B cell (primary cell): ENCODE measurements at regions of chr10 and their contacts with region 1.

Region 1: DNA sequence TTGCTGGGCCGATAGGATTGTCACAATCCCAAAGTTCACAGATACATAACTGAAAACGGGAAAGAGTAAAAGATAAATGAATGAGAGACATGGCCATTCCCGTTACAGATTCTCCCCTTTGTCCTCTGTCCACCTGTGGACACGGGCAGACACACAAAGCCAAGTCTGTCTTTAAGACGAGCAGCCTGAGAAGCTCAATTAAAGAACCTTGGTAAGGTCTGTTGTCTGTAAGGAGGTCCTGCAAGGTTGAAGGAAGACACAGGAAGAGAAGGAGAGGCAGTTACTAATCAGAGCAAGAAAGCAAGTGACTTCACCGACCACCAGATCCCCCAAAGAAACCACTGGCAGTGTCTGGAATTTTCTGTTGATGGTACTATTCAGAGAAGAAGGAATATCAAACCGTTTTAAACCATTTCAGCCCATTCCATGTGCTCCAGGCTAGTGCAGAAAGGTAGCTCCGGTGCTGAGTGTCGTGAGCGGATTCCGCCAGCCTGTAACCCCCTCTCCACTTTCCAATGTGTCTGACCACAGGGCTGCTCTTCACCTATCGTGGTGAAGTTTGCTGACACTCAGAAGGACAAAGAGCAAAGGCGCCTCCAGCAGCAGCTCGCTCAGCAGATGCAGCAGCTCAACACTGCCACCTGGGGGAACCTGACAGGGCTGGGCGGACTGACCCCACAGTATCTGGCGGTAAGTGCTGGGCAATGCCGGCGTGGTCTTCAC is 252.6 kb downstream of the CELF2 start:
- DNase-seq: peak; percentile 72
- ATAC-seq: peak; percentile 87
- H3K4me3 ChIP-seq: no peak overlapping the region
- H3K4me3 Mint-ChIP-seq: no peak overlapping the region
- H3K27ac ChIP-seq: peak overlapping the region in 1 of 2 donors; percentile 51
- H3K27ac Mint-ChIP-seq: peak overlapping the region; percentile 28
- H3K4me1 ChIP-seq: peaks cover 30 to 37% of the 10 kb centered on the region in 2 donors
- H3K4me1 Mint-ChIP-seq: peaks cover 43% of the 10 kb centered on the region
- H3K27me3 ChIP-seq: no peaks in the 10 kb centered on the region
- H3K27me3 Mint-ChIP-seq: no peaks in the 10 kb centered on the region
- CTCF ChIP-seq: peak; percentile 86

Region 2: GRCh38 chr10:11113156-11113555 is 157.1 kb before region 1 on chr10:
- CTCF ChIA-PET with region 1: interaction called, 85 read pairs
- POLR2A ChIA-PET with region 1: no interaction called
- intact Hi-C with region 1: loop called (anchors 1 kb)
- DNase-seq: peak; percentile 71
- ATAC-seq: peak; percentile 70
- H3K4me3 ChIP-seq: no peak overlapping the region
- H3K4me3 Mint-ChIP-seq: peak overlapping the region; percentile 17
- H3K27ac ChIP-seq: no peak overlapping the region
- H3K27ac Mint-ChIP-seq: no peak overlapping the region
- H3K4me1 ChIP-seq: peaks cover 7 to 9% of the 10 kb centered on the region in 2 donors
- H3K4me1 Mint-ChIP-seq: peaks cover 7% of the 10 kb centered on the region
- H3K27me3 ChIP-seq: no peaks in the 10 kb centered on the region
- H3K27me3 Mint-ChIP-seq: no peaks in the 10 kb centered on the region
- CTCF ChIP-seq: peak; percentile 67

Region 3: GRCh38 chr10:11145495-11145855 is 124.8 kb before region 1 on chr10:
- CTCF ChIA-PET with region 1: interaction called, 51 read pairs
- POLR2A ChIA-PET with region 1: interaction called, 6 read pairs
- intact Hi-C with region 1: loop called (anchors 1 kb)
- DNase-seq: peak; percentile 70
- ATAC-seq: peak; percentile 75
- H3K4me3 ChIP-seq: peak overlapping the region in 4 of 5 experiments; percentile 7 to 33 (median 22)
- H3K4me3 Mint-ChIP-seq: peak overlapping the region; percentile 68
- H3K27ac ChIP-seq: peak overlapping the region; percentile 33 to 76
- H3K27ac Mint-ChIP-seq: peak overlapping the region; percentile 85
- H3K4me1 ChIP-seq: peaks cover 84 to 89% of the 10 kb centered on the region in 2 donors
- H3K4me1 Mint-ChIP-seq: peaks cover 90% of the 10 kb centered on the region
- H3K27me3 ChIP-seq: no peaks in the 10 kb centered on the region
- H3K27me3 Mint-ChIP-seq: no peaks in the 10 kb centered on the region
- CTCF ChIP-seq: no peak

Region 4: DNA sequence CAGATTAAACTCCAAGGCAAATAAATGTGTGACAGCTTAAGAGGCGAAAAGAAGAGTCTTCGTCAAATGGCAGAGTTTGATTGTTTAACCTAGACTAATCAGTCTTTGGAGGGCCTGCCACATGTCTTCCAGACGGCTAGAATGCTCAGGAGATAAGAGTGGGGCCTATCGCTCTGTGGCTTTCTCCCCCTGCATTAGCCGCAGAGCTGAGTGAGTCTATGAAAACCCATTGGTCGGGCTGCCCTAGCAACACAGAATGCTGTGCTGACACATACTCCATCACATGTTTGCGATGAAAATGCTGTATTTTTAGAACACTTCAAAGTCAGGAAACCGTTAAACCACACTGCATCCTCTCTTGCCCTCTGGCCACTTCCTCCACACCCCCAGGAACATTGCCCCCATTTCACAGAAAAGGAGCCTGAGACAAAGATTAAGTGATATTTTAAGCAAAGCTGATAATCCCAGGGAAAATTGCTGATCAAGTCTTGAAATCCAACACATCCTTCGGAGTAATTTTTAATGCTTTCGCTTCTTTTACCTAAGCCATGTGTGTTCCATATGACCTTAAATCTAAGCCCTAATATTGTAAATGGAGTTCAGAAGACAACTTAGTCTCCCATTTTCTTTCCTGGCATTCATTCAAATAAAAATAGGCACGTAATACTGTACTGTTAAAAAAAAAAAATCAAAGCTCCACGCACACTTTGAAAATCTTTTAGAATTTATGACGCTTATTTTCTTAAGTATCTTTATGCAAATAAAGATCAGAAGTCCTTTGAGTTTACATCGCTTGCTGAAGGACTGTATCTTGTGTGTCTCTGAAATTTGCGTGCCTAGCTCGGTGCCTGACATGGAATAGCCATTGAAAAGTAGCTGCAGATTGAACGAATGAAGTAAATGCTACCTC is 91.4 kb before region 1 on chr10:
- CTCF ChIA-PET with region 1: interaction called, 30 read pairs
- POLR2A ChIA-PET with region 1: no interaction called
- intact Hi-C with region 1: no loop called
- DNase-seq: peak; percentile 85
- ATAC-seq: peak; percentile 73
- H3K4me3 ChIP-seq: peak overlapping the region in 4 of 5 experiments; percentile 3 to 43 (median 18)
- H3K4me3 Mint-ChIP-seq: peak overlapping the region; percentile 81
- H3K27ac ChIP-seq: peak overlapping the region; percentile 63 to 87
- H3K27ac Mint-ChIP-seq: peak overlapping the region; percentile 94
- H3K4me1 ChIP-seq: peaks cover 96% of the 10 kb centered on the region in 2 donors
- H3K4me1 Mint-ChIP-seq: peaks cover 97% of the 10 kb centered on the region
- H3K27me3 ChIP-seq: no peaks in the 10 kb centered on the region
- H3K27me3 Mint-ChIP-seq: no peaks in the 10 kb centered on the region
- CTCF ChIP-seq: no peak

Region 5: DNA sequence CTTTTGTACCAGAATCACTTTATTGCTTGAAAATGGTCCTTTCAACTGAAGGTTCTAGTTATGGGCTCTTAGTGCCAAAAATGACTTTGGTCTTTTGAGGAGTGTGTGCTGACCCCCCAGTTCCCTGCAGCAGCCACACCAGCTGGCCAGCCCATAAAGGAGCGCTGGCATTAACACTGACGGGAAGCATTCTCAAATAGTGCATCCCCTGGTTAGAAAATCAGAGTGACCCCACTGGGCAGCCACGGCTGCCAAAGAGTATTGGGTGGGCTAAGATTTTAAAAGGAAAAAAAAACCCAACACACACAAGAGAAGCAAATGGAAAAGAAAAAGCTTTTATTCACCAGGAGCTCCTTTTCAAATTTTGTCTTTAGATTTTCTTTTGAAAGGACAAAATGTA is 52.8 kb before region 1 on chr10:
- CTCF ChIA-PET with region 1: interaction called, 11 read pairs
- POLR2A ChIA-PET with region 1: no interaction called
- intact Hi-C with region 1: no loop called
- DNase-seq: no peak
- ATAC-seq: no peak
- H3K4me3 ChIP-seq: no peak overlapping the region
- H3K4me3 Mint-ChIP-seq: no peak overlapping the region
- H3K27ac ChIP-seq: peak overlapping the region in 1 of 2 donors; percentile 30
- H3K27ac Mint-ChIP-seq: no peak overlapping the region
- H3K4me1 ChIP-seq: peaks cover 11 to 12% of the 10 kb centered on the region in 2 donors
- H3K4me1 Mint-ChIP-seq: peaks cover 49% of the 10 kb centered on the region
- H3K27me3 ChIP-seq: no peaks in the 10 kb centered on the region
- H3K27me3 Mint-ChIP-seq: no peaks in the 10 kb centered on the region
- CTCF ChIP-seq: no peak

Region 6: GRCh38 chr10:11242443-11243387 is 27.6 kb before region 1 on chr10:
- CTCF ChIA-PET with region 1: interaction called, 20 read pairs
- POLR2A ChIA-PET with region 1: no interaction called
- intact Hi-C with region 1: no loop called
- DNase-seq: peak; percentile 75
- ATAC-seq: peak; percentile 61
- H3K4me3 ChIP-seq: peak overlapping the region in 4 of 5 experiments; percentile 28 to 58 (median 40)
- H3K4me3 Mint-ChIP-seq: peak overlapping the region; percentile 91
- H3K27ac ChIP-seq: peak overlapping the region; percentile 66 to 80
- H3K27ac Mint-ChIP-seq: peak overlapping the region; percentile 97
- H3K4me1 ChIP-seq: peaks cover 82 to 85% of the 10 kb centered on the region in 2 donors
- H3K4me1 Mint-ChIP-seq: peaks cover 52% of the 10 kb centered on the region
- H3K27me3 ChIP-seq: no peaks in the 10 kb centered on the region
- H3K27me3 Mint-ChIP-seq: no peaks in the 10 kb centered on the region
- CTCF ChIP-seq: no peak

Region 7: GRCh38 chr10:11255796-11256444 is 14.4 kb before region 1 on chr10:
- CTCF ChIA-PET with region 1: interaction called, 48 read pairs
- POLR2A ChIA-PET with region 1: no interaction called
- intact Hi-C with region 1: no loop called
- DNase-seq: peak; percentile 56
- ATAC-seq: peak; percentile 56
- H3K4me3 ChIP-seq: no peak overlapping the region
- H3K4me3 Mint-ChIP-seq: peak overlapping the region; percentile 54
- H3K27ac ChIP-seq: peak overlapping the region; percentile 48 to 70
- H3K27ac Mint-ChIP-seq: peak overlapping the region; percentile 87
- H3K4me1 ChIP-seq: peaks cover 51 to 72% of the 10 kb centered on the region in 2 donors
- H3K4me1 Mint-ChIP-seq: peaks cover 70% of the 10 kb centered on the region
- H3K27me3 ChIP-seq: no peaks in the 10 kb centered on the region
- H3K27me3 Mint-ChIP-seq: no peaks in the 10 kb centered on the region
- CTCF ChIP-seq: no peak

Region 8: DNA sequence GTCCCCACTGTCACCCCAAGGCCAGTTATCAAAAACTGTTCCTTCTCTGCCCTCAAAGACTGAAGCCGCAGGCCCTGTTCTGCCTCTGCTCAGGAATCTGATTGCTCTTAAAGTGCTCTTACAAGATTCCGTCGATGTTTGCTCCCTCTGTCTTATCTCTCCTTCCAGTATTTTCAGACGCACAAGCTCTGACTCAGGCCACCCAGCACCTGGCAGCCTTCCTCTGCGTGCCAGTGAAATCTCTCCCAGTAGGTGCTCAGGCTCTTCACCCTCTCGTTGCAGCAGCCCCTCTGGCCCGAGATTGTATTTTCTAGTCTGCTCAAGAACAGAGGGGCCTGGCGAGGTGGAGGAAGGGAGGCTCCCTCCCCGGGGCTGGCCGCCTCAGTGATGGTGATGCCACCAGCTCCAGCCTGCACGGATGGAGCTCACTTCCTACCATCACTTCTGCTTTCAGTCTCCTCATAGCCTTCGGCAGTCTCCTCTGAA is 64.9 kb after region 1 on chr10:
- CTCF ChIA-PET with region 1: no interaction called
- POLR2A ChIA-PET with region 1: no interaction called
- intact Hi-C with region 1: no loop called
- DNase-seq: peak; percentile 64
- ATAC-seq: peak; percentile 78
- H3K4me3 ChIP-seq: no peak overlapping the region
- H3K4me3 Mint-ChIP-seq: peak overlapping the region; percentile 30
- H3K27ac ChIP-seq: peak overlapping the region; percentile 28 to 62
- H3K27ac Mint-ChIP-seq: peak overlapping the region; percentile 89
- H3K4me1 ChIP-seq: peaks cover 13 to 20% of the 10 kb centered on the region in 2 donors
- H3K4me1 Mint-ChIP-seq: peaks cover 31% of the 10 kb centered on the region
- H3K27me3 ChIP-seq: no peaks in the 10 kb centered on the region
- H3K27me3 Mint-ChIP-seq: no peaks in the 10 kb centered on the region
- CTCF ChIP-seq: no peak